K562 (cell line): ENCODE measurements at regions of chr9 and their contacts with region 1.

Region 1: GRCh38 chr9:99819856-99820684 is 1.6 kb upstream of the NR4A3 start:
- DNase-seq: peak in 2 of 4 experiments; percentile 94 to 98
- ATAC-seq: peak; percentile 74
- H3K4me3 ChIP-seq: peak overlapping the region; percentile 84
- H3K27ac ChIP-seq: peak overlapping the region; percentile 96
- H3K4me1 ChIP-seq: peaks cover 12 to 42% of the 10 kb centered on the region in 2 experiments
- H3K27me3 ChIP-seq: peaks cover 21 to 30% of the 10 kb centered on the region in 2 experiments
- CTCF ChIP-seq: peak in 2 of 3 experiments; percentile 33 to 45; a peak in 4 of 6 replicates
- EP300 ChIP-seq: no peak; the same call in 1 of the 2 replicates
- POLR2A ChIP-seq: no peak; the same call in none of the 2 replicates
- RAD21 ChIP-seq: peak in 1 of 2 experiments; percentile 29; a peak in 2 of 4 replicates

Region 2: DNA sequence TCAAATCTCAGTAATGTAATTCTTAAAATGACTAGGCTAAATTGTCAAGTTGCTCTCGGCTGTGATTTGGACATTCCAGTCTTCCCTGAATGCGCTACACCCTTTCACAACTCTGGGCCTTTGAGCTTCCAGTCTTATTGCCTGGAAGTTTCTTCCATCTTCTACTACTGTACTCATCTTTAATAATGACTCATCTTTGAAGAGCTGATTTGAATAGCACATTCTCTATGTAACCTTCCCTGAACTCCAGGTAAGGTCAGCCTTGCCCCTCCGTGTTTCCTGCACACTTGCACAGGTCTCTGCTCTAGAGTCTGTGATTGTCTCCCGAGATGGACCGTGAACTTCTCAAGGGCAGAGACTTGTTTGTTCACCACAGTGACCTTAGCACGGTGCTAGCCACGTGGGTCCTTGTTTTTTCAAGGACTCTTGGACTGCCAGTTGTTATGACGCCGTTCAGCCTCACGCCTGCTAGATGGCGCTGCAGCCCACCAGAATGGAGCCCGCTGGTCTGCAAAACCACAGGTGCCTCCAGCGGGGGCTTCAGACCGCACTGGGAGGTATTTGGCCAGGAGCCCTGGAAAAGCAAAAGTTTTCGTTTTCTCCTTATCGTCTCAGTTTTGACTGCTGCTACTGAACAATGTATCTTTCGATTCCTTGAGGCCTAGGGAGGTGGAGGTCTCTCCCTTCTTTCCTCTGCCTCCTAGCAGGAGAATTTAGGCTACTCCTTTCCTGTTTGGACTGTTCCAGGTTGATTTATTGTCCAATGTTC is 553.6 kb before region 1 on chr9:
- CTCF ChIA-PET with region 1: no interaction called
- POLR2A ChIA-PET with region 1: no interaction called
- in situ Hi-C with region 1: no loop called
- intact Hi-C with region 1: loop called (anchors 10 kb)
- DNase-seq: peak; percentile 61 to 84 (median 73)
- ATAC-seq: peak; percentile 95
- H3K4me3 ChIP-seq: no peak overlapping the region
- H3K27ac ChIP-seq: no peak overlapping the region
- H3K4me1 ChIP-seq: peaks cover 3 to 4% of the 10 kb centered on the region in 2 experiments; a peak in 3 of 5 replicates
- H3K27me3 ChIP-seq: peaks cover 4 to 10% of the 10 kb centered on the region in 2 experiments; a peak in 3 of 5 replicates
- CTCF ChIP-seq: peak; percentile 92 to 96 (median 93)
- EP300 ChIP-seq: no peak
- POLR2A ChIP-seq: no peak
- RAD21 ChIP-seq: peak; percentile 89 to 90

Region 3: DNA sequence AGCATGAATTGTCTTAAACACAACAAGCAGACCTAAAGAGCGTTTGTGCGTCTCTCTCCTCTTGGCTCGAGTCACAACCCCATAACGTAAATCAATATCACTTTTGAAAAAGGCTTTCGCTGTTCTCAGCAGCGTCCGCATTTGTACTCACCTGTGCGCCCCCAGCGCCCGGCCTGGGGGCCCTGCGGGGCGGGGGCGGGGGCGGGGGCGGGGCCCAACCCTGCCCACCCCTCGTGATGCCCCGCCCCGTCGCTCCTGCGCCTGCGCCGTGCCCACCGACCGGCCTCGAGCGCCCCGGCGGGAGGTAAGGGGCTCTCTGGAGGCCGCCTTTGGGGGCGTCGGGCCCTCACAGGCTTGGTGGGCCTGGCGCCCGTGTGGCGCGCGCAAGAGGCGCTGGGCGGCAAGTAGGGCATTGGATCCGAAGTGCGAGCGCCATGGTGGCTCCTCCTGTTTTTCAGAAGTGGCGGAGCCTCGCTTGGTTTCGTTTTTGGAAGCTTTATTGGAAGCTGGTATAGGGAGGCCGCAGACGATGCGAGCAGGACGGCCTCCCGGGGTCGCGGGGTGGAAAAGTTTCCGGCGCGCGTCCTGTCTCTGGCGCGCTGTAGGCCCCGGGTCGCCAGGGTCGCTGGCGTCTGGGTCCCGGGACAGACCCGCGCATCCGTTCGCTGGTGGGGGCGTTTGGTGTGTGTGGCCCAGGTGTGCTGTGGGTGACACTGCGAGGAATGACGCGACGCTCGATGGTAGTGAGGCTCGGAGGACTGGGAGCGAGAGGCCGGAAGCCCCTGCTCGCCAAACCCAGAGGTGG is 86.5 kb after region 1 on chr9 and contains the start of gene STX17:
- CTCF ChIA-PET with region 1: no interaction called
- POLR2A ChIA-PET with region 1: no interaction called
- in situ Hi-C with region 1: no loop called
- intact Hi-C with region 1: loop called (anchors 2 kb)
- DNase-seq: peak; percentile 79 to 97 (median 96)
- ATAC-seq: peak; percentile 91
- H3K4me3 ChIP-seq: peak within 1 kb of the TSS; percentile 96
- H3K27ac ChIP-seq: peak within 1 kb of the TSS; percentile 95
- H3K4me1 ChIP-seq: peaks cover 0 to 6% of the 10 kb centered on the region in 2 experiments; a peak in 2 of 5 replicates
- H3K27me3 ChIP-seq: no peaks in the 10 kb centered on the region
- CTCF ChIP-seq: 0 out of 6 replicates have a peak, but pooled peaks of 1 of the 3 experiments have one; percentile 0
- EP300 ChIP-seq: no peak
- POLR2A ChIP-seq: peak; percentile 83
- RAD21 ChIP-seq: no peak; a peak in 1 of 4 replicates
- polyA plus RNA-seq, gene STX17: 14.9 to 17.1 TPM

Region 4: GRCh38 chr9:100011062-100011681 is 191.1 kb after region 1 on chr9:
- CTCF ChIA-PET with region 1: no interaction called
- POLR2A ChIA-PET with region 1: no interaction called
- in situ Hi-C with region 1: no loop called
- intact Hi-C with region 1: loop called (anchors 2 kb)
- DNase-seq: peak; percentile 48 to 74 (median 59)
- ATAC-seq: peak; percentile 77; the same call in 2 of the 3 replicates
- H3K4me3 ChIP-seq: no peak overlapping the region
- H3K27ac ChIP-seq: no peak overlapping the region
- H3K4me1 ChIP-seq: no peaks in the 10 kb centered on the region
- H3K27me3 ChIP-seq: no peaks in the 10 kb centered on the region
- CTCF ChIP-seq: peak; percentile 49 to 79 (median 55); a peak in 5 of 6 replicates
- EP300 ChIP-seq: no peak
- POLR2A ChIP-seq: no peak
- RAD21 ChIP-seq: peak; percentile 83 to 90

Region 5: DNA sequence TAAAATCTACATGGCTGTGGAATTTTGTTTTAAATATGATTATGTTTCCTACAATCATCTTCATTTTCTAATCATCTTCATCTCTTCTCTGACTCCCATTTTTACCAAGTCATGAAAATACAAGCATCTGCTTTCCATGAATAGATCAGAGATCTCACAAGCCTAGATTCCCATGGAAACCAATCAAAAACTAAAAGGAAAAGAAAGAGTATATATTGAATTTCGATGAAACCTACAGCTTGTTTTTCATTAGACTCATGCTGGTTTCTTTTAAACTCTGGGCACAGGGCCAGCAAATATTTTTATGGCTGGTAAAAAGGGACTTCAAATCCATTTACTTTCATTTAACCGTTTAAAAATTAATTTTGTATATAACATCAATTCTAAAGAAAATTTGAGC is 330.1 kb after region 1 on chr9:
- CTCF ChIA-PET with region 1: no interaction called
- POLR2A ChIA-PET with region 1: no interaction called
- in situ Hi-C with region 1: no loop called
- intact Hi-C with region 1: loop called (anchors 10 kb)
- DNase-seq: no peak
- ATAC-seq: no peak
- H3K4me3 ChIP-seq: no peak overlapping the region
- H3K27ac ChIP-seq: no peak overlapping the region
- H3K4me1 ChIP-seq: peaks cover 0 to 11% of the 10 kb centered on the region in 2 experiments; a peak in 3 of 5 replicates
- H3K27me3 ChIP-seq: no peaks in the 10 kb centered on the region
- CTCF ChIP-seq: no peak
- EP300 ChIP-seq: no peak
- POLR2A ChIP-seq: no peak
- RAD21 ChIP-seq: no peak

Region 6: GRCh38 chr9:100196215-100196614 is 376.1 kb after region 1 on chr9:
- CTCF ChIA-PET with region 1: no interaction called
- POLR2A ChIA-PET with region 1: no interaction called
- in situ Hi-C with region 1: no loop called
- intact Hi-C with region 1: no loop called
- DNase-seq: peak in 1 of 4 experiments; percentile 44
- ATAC-seq: peak; percentile 33; the same call in 2 of the 3 replicates
- H3K4me3 ChIP-seq: no peak overlapping the region
- H3K27ac ChIP-seq: no peak overlapping the region; the same call in 2 of the 3 replicates
- H3K4me1 ChIP-seq: peaks cover 0 to 8% of the 10 kb centered on the region in 2 experiments; a peak in 2 of 5 replicates
- H3K27me3 ChIP-seq: no peaks in the 10 kb centered on the region
- CTCF ChIP-seq: no peak
- EP300 ChIP-seq: peak; percentile 38; the same call in 1 of the 2 replicates
- POLR2A ChIP-seq: no peak
- RAD21 ChIP-seq: no peak

Region 7: GRCh38 chr9:100322954-100323536 is 503.0 kb after region 1 on chr9:
- CTCF ChIA-PET with region 1: no interaction called
- POLR2A ChIA-PET with region 1: interaction called, 4 read pairs
- in situ Hi-C with region 1: no loop called
- intact Hi-C with region 1: loop called (anchors 10 kb)
- DNase-seq: peak; percentile 19 to 57 (median 25)
- ATAC-seq: peak; percentile 72
- H3K4me3 ChIP-seq: no peak overlapping the region
- H3K27ac ChIP-seq: no peak overlapping the region
- H3K4me1 ChIP-seq: no peaks in the 10 kb centered on the region
- H3K27me3 ChIP-seq: no peaks in the 10 kb centered on the region
- CTCF ChIP-seq: peak; percentile 47 to 76 (median 67); a peak in 5 of 6 replicates
- EP300 ChIP-seq: no peak
- POLR2A ChIP-seq: no peak
- RAD21 ChIP-seq: peak; percentile 25 to 61